ENCODE measurements at regions of chr6 and their contacts with region 1.

Region 1: GRCh38 chr6:134822920-134823709 is 126.8 kb downstream of the ALDH8A1 start:
- DNase-seq: peak; percentile 72
- ATAC-seq: peak; percentile 74
- H3K4me3 ChIP-seq: no peak overlapping the region
- H3K4me3 Mint-ChIP-seq: no peak overlapping the region
- H3K27ac ChIP-seq: no peak overlapping the region
- H3K27ac Mint-ChIP-seq: no peak overlapping the region
- H3K4me1 ChIP-seq: no peaks in the 10 kb centered on the region
- H3K4me1 Mint-ChIP-seq: peaks cover 9% of the 10 kb centered on the region
- H3K27me3 ChIP-seq: no peaks in the 10 kb centered on the region
- H3K27me3 Mint-ChIP-seq: peaks cover 3% of the 10 kb centered on the region
- CTCF ChIP-seq: peak; percentile 77

Region 2: GRCh38 chr6:134029495-134030455 is 793.3 kb before region 1 on chr6:
- CTCF ChIA-PET with region 1: no interaction called
- POLR2A ChIA-PET with region 1: no interaction called
- intact Hi-C with region 1: no loop called
- DNase-seq: no peak
- ATAC-seq: no peak
- H3K4me3 ChIP-seq: no peak overlapping the region
- H3K4me3 Mint-ChIP-seq: no peak overlapping the region
- H3K27ac ChIP-seq: no peak overlapping the region
- H3K27ac Mint-ChIP-seq: no peak overlapping the region
- H3K4me1 ChIP-seq: no peaks in the 10 kb centered on the region
- H3K4me1 Mint-ChIP-seq: no peaks in the 10 kb centered on the region
- H3K27me3 ChIP-seq: peaks cover 0 to 7% (median 3%) of the 10 kb centered on the region in 4 experiments
- H3K27me3 Mint-ChIP-seq: peaks cover 13% of the 10 kb centered on the region
- CTCF ChIP-seq: no peak

Region 3: GRCh38 chr6:134882426-134883038 is 59.4 kb after region 1 on chr6:
- CTCF ChIA-PET with region 1: interaction called, 6 read pairs
- POLR2A ChIA-PET with region 1: no interaction called
- intact Hi-C with region 1: loop called (anchors 2 kb)
- DNase-seq: peak; percentile 65
- ATAC-seq: peak; percentile 54
- H3K4me3 ChIP-seq: no peak overlapping the region
- H3K4me3 Mint-ChIP-seq: no peak overlapping the region
- H3K27ac ChIP-seq: no peak overlapping the region
- H3K27ac Mint-ChIP-seq: no peak overlapping the region
- H3K4me1 ChIP-seq: peaks cover 0 to 3% of the 10 kb centered on the region in 2 donors
- H3K4me1 Mint-ChIP-seq: no peaks in the 10 kb centered on the region
- H3K27me3 ChIP-seq: peaks cover 0 to 5% (median 2%) of the 10 kb centered on the region in 4 experiments
- H3K27me3 Mint-ChIP-seq: peaks cover 21% of the 10 kb centered on the region
- CTCF ChIP-seq: peak; percentile 87